Posterior cingulate gyrus (tissue), 11 donors: ENCODE measurements at regions of chr4 and their contacts with region 1.

Region 1: DNA sequence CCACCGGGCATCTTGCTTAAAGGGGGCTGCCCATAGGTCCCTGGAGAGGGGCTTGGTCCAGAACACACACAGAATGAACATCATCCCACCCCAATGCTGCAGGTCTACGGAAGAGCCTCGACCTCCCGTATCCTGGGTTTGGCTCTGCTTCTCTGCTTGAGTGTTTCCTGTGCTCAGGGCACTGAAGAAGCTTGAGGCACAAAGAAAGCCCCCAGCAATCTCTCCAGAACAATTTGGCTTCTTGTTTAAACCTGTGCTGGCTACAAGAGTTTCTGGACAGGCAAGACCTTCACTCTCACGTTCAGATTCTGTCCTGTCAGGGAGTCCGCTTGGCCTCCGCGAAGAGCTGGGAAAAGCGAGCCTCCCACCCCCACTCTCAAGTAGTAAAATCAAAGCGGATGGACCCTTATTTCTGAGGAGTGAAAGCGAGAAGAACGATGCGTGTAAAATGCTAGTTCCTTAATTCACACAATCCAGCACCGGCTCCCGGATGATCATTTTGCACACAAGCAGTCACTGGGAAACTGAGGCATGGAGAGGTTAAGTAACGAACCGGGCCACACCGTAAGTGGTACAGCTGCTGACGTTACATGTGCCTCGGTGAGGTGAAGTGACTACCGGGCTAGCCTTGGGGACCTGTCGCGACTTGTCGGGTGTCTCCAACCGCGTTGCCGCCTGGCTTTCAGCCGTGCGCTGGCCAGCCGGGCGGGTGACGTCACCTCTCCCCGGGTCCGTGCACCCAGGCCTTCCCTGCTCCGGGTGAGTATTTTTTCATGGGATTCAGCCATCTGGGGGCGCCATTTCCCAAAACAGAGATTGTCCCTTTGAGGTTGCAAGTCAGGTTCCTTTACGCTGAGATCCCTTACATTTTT is 3.1 kb upstream of the SFRP2 start:
- DNase-seq: peak in 9 of 10 donors; percentile 28 to 90 (median 56)

Region 2: GRCh38 chr4:154024097-154024694 is 232.2 kb after region 1 on chr4:
- intact Hi-C with region 1: loop called (anchors 10 kb)
- DNase-seq: no peak